GM10248 (cell line): ENCODE measurements at regions of chr2 and their contacts with region 1.

Region 1: GRCh38 chr2:46230115-46230571 is 67.1 kb upstream of the EPAS1 start:
- DNase-seq: peak; percentile 43
- CTCF ChIP-seq: peak; percentile 23

Region 2: DNA sequence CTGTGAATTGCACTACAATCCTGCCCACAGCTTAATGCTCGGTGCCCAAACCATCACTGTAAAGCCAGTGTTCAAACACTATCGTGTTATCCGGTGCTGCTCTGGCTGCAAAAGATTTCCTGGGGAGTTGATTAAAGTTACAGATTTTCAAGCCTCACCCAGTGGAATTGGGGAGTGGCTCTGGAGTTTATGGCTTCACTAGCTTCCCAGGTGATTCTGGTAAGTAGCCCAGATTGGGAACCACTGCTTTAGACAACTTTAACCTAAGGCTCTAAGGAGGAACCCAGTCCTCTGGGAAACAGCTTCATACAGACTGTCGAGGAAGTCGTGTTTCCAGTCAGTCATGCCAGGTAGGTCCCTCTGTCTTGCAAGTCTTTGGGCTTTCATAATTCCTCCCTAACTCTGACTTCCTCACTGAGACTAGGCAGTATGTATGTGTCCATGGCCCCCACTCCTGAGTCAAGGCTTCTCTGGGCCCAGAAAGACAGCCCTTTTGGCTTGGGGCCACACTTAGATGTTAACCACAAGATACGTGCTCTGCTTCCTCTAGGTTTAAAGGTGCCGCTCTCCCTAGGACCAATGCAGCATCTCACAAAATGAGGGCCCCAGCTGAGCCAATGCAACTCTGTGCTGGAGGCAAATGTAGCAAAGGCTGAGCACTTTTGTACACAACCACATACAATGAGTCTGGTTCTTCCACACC is 279.0 kb before region 1 on chr2:
- CTCF ChIA-PET with region 1: no interaction called
- POLR2A ChIA-PET with region 1: no interaction called
- DNase-seq: no peak
- CTCF ChIP-seq: no peak

Region 3: GRCh38 chr2:46216257-46216656 is 13.9 kb before region 1 on chr2:
- CTCF ChIA-PET with region 1: interaction called, 18 read pairs
- POLR2A ChIA-PET with region 1: no interaction called
- DNase-seq: no peak
- CTCF ChIP-seq: no peak

Region 4: DNA sequence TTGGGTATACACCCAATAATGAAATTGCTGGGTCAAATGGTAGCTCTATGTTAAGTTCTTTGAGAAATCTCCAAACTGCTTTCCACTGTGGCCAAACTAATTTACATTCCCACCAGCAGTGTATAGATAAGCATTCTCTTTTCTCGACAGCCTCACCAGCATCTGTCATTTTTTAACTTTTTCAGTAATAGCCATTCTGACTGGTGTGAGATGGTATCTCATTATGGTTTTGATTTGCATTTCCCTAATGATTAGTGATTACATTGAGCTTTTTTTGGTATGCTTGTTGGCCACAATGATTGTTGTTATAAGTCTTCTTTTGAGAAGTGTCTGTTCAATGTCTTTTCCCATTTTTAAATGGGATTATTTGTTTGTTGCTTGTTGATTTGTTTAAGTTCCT is 16.6 kb after region 1 on chr2:
- CTCF ChIA-PET with region 1: interaction called, 20 read pairs
- POLR2A ChIA-PET with region 1: no interaction called
- DNase-seq: no peak
- CTCF ChIP-seq: no peak